Activated CD4-positive, alpha-beta T cell treated with anti-CD3 and anti-CD28 coated beads, Interleukin-2, amount 10 ng/mL, durations not matched to agents 7 days and 5 days (primary cell): ENCODE measurements at regions of chr15 and their contacts with region 1.

Region 1: GRCh38 chr15:88624156-88624970 is 3.2 kb downstream of the AEN start:
- DNase-seq: peak; percentile 69
- H3K4me3 Mint-ChIP-seq: peak overlapping the region; percentile 91
- H3K27ac Mint-ChIP-seq: peak overlapping the region; percentile 93
- H3K4me1 Mint-ChIP-seq: peaks cover 80% of the 10 kb centered on the region
- H3K27me3 Mint-ChIP-seq: peaks cover 5% of the 10 kb centered on the region

Region 2: GRCh38 chr15:88638626-88639372 is 14.4 kb after region 1 on chr15 and contains the start of gene ISG20:
- CTCF ChIA-PET with region 1: interaction called, 17 read pairs
- POLR2A ChIA-PET with region 1: interaction called, 13 read pairs
- DNase-seq: peak; percentile 98
- H3K4me3 Mint-ChIP-seq: peak within 1 kb of the TSS; percentile 88
- H3K27ac Mint-ChIP-seq: peak within 1 kb of the TSS; percentile 96
- H3K4me1 Mint-ChIP-seq: peaks cover 69% of the 10 kb centered on the region
- H3K27me3 Mint-ChIP-seq: no peaks in the 10 kb centered on the region
- total RNA-seq, gene ISG20: 206 to 236 TPM

Region 3: GRCh38 chr15:88664151-88664778 is 39.9 kb after region 1 on chr15:
- CTCF ChIA-PET with region 1: interaction called, 11 read pairs
- POLR2A ChIA-PET with region 1: no interaction called
- DNase-seq: peak; percentile 65
- H3K4me3 Mint-ChIP-seq: no peak overlapping the region
- H3K27ac Mint-ChIP-seq: peak overlapping the region; percentile 64
- H3K4me1 Mint-ChIP-seq: peaks cover 10% of the 10 kb centered on the region
- H3K27me3 Mint-ChIP-seq: peaks cover 12% of the 10 kb centered on the region